ENCODE measurements at regions of chr10 and their contacts with region 1.

Region 1: GRCh38 chr10:30384701-30385201 is 35.7 kb upstream of the MTPAP start:
- DNase-seq: peak; percentile 68
- H3K4me3 Mint-ChIP-seq: no peak overlapping the region
- H3K27ac Mint-ChIP-seq: no peak overlapping the region
- H3K4me1 Mint-ChIP-seq: no peaks in the 10 kb centered on the region
- H3K27me3 Mint-ChIP-seq: peaks cover 32% of the 10 kb centered on the region

Region 2: DNA sequence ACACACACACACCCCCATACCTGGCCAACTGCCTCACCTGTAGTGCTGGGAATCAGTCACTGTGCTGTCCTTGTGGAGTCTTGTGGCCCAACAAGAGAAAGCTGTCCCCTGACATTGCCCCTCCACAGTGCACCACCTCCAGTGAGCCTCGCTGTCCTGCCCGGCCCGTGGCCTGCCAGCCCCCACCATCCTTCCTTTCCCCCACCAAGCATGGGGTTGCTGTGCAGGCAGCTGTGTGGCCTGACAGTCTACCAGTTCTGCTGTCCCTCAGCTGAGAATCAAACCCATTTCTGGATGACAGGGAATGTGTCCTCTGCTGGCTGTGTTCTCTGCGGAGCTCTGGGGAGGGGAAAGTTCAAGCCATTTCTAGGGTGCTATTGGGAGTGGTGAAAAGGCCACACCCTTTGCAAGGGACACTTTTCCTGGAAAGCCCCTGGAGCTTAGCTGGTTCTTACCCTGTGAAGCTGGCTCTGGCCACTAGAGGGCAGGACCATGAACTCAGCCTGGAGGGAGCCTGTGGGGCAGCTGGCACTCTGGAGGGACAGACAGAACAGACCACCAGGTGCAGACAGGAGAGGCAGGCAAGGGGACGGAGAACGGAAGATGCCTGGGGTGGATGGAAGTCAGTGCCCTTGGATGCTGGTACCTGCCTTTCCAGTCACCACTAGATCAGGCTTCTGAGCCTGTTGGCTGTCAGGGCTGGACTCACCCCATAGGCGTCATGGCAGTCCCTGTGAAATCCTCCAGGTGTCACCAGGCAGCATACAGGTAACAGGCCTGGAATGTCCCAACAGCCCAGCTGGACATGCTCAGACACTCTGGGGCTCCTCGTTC is 25.2 kb before region 1 on chr10:
- intact Hi-C with region 1: loop called (anchors 1 kb)
- DNase-seq: peak; percentile 90
- H3K4me3 Mint-ChIP-seq: no peak overlapping the region
- H3K27ac Mint-ChIP-seq: peak overlapping the region; percentile 32
- H3K4me1 Mint-ChIP-seq: peaks cover 6% of the 10 kb centered on the region
- H3K27me3 Mint-ChIP-seq: peaks cover 18% of the 10 kb centered on the region

Region 3: GRCh38 chr10:30398788-30399187 is 14.0 kb after region 1 on chr10:
- intact Hi-C with region 1: no loop called
- DNase-seq: peak; percentile 70
- H3K4me3 Mint-ChIP-seq: no peak overlapping the region
- H3K27ac Mint-ChIP-seq: no peak overlapping the region
- H3K4me1 Mint-ChIP-seq: peaks cover 25% of the 10 kb centered on the region
- H3K27me3 Mint-ChIP-seq: peaks cover 12% of the 10 kb centered on the region

Measured in activated CD4-positive, alpha-beta T cell treated with anti-CD3 and anti-CD28 coated beads, Interleukin-2, amount 10 ng/mL, durations not matched to agents 24 days and 14 days (primary cell).